Tibial artery (tissue), 4 donors: ENCODE measurements at regions of chr22 and their contacts with region 1.

Region 1: GRCh38 chr22:18077639-18078328 is at the start of gene PEX26:
- DNase-seq: peak; percentile 96 to 97
- H3K4me3 ChIP-seq: peak within 1 kb of the TSS; percentile 77 to 90
- H3K27ac ChIP-seq: peak within 1 kb of the TSS; percentile 74 to 77
- H3K4me1 ChIP-seq: peaks cover 6 to 37% (median 31%) of the 10 kb centered on the region in 4 donors
- H3K27me3 ChIP-seq: no peaks in the 10 kb centered on the region
- CTCF ChIP-seq: no peak

Region 2: GRCh38 chr22:17830043-17830961 is 247.5 kb before region 1 on chr22:
- intact Hi-C with region 1: loop called (anchors 5 kb)
- DNase-seq: peak; percentile 91 to 93
- H3K4me3 ChIP-seq: no peak overlapping the region
- H3K27ac ChIP-seq: peak overlapping the region; percentile 71 to 81
- H3K4me1 ChIP-seq: peaks cover 4 to 35% (median 22%) of the 10 kb centered on the region in 4 donors
- H3K27me3 ChIP-seq: no peaks in the 10 kb centered on the region
- CTCF ChIP-seq: peak; percentile 99 to 100

Region 3: GRCh38 chr22:17910561-17911311 is 167.0 kb before region 1 on chr22:
- intact Hi-C with region 1: loop called (anchors 5 kb)
- DNase-seq: peak; percentile 74 to 88
- H3K4me3 ChIP-seq: peak overlapping the region in 1 of 2 donors; percentile 14
- H3K27ac ChIP-seq: peak overlapping the region; percentile 63 to 74
- H3K4me1 ChIP-seq: peaks cover 0 to 59% (median 25%) of the 10 kb centered on the region in 4 donors
- H3K27me3 ChIP-seq: no peaks in the 10 kb centered on the region
- CTCF ChIP-seq: peak in 1 of 2 experiments; percentile 20

Region 4: GRCh38 chr22:18001040-18001893 is 76.5 kb before region 1 on chr22:
- intact Hi-C with region 1: loop called (anchors 2 kb)
- DNase-seq: peak; percentile 88 to 92
- H3K4me3 ChIP-seq: peak overlapping the region; percentile 75 to 99
- H3K27ac ChIP-seq: peak overlapping the region; percentile 81 to 92
- H3K4me1 ChIP-seq: peaks cover 0 to 53% (median 13%) of the 10 kb centered on the region in 4 donors
- H3K27me3 ChIP-seq: no peaks in the 10 kb centered on the region
- CTCF ChIP-seq: peak; percentile 51 to 53

Region 5: DNA sequence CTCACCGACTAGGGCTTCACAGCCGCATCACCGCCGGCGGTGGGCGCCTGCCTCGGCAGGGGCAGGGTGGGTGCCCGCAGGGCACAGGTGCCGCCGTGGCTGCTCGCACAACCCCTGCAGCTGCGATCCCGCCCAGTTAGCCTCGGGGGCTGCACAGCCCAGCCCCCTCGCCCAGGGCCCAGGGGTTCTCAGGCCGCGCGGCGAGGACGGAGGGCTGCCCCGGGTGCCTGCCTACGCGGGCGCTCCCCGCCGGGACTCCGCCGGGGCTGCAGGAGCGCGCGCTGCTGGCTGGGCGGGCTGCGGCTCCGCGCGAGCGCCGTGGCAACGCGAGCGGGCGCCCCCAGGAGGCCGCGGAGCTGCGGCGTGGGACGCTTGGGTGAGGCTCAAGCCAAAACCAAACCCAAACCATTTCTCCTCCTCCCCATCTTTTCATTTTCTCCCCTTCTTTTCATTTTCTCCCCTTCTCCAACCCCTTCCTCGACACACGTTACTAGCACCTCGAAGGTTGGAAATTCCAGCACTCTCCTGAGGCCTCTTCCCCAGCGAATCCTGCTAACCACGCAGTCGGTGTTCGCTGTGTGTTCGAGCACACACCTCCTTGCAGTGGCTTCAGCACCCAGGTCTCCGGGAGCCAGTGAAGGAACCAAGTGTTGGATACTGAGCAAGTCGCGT is 53.4 kb before region 1 on chr22 and contains the start of gene MICAL3:
- intact Hi-C with region 1: loop called (anchors 10 kb)
- DNase-seq: peak in 1 of 2 donors; percentile 79
- H3K4me3 ChIP-seq: peak within 1 kb of the TSS; percentile 73 to 83
- H3K27ac ChIP-seq: peak within 1 kb of the TSS; percentile 87 to 92
- H3K4me1 ChIP-seq: peaks cover 0 to 34% (median 20%) of the 10 kb centered on the region in 4 donors
- H3K27me3 ChIP-seq: no peaks in the 10 kb centered on the region
- CTCF ChIP-seq: peak; percentile 50 to 60